ENCODE measurements at regions of chr6 and their contacts with region 1.

Region 1: GRCh38 chr6:113306552-113307145 is 550.5 kb upstream of the MARCKS start:
- DNase-seq: peak; percentile 55 to 64
- H3K4me3 ChIP-seq: no peak overlapping the region
- H3K4me3 Mint-ChIP-seq: no peak overlapping the region
- H3K27ac Mint-ChIP-seq: no peak overlapping the region
- H3K4me1 ChIP-seq: peaks cover 6% of the 10 kb centered on the region; the same call in 1 of the 2 replicates
- H3K4me1 Mint-ChIP-seq: peaks cover 7% of the 10 kb centered on the region
- H3K27me3 ChIP-seq: no peaks in the 10 kb centered on the region
- H3K27me3 Mint-ChIP-seq: no peaks in the 10 kb centered on the region
- CTCF ChIP-seq: peak; percentile 64 to 68

Region 2: DNA sequence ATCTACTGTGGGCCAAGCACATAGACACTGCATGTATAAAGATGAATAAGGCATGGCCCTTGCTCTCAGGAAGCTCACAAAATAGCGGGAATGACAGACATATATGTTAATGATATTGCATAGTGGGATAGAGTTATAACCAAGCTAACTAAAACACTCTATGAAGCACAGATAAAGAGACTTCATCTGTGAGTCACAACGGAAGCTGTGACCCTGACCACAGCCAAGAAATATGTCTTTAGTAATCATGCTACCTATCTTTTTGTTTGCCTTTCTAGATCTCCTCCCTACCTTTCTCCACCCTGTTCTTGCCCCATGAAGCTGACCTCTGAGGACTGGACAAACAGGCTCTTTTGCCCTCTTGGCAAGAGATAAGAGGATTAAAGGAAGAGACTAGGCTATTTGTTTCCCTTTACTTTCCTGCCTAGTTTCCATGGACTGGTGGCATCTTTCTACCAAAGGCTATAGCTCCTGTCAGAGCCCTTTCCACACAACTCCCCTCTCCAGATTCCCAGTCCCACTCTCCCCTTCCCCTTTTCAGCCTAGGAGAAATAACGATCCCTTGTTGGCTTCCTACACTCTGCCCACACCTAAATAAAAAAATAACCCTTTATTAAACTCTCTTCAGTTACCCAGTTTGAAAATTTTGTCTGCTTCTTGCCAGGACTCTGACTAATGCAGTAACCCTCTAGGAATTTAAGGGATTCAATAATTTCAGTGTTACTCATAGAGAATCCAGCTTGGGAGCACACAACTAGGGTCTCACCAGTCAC is 45.6 kb after region 1 on chr6:
- CTCF ChIA-PET with region 1: interaction called, 7 read pairs
- POLR2A ChIA-PET with region 1: no interaction called
- intact Hi-C with region 1: loop called (anchors 1 kb)
- DNase-seq: peak; percentile 90 to 96
- H3K4me3 ChIP-seq: no peak overlapping the region
- H3K4me3 Mint-ChIP-seq: peak overlapping the region; percentile 65
- H3K27ac Mint-ChIP-seq: peak overlapping the region; percentile 98
- H3K4me1 ChIP-seq: peaks cover 67% of the 10 kb centered on the region
- H3K4me1 Mint-ChIP-seq: peaks cover 67% of the 10 kb centered on the region
- H3K27me3 ChIP-seq: no peaks in the 10 kb centered on the region
- H3K27me3 Mint-ChIP-seq: no peaks in the 10 kb centered on the region
- CTCF ChIP-seq: no peak

Region 3: GRCh38 chr6:113381959-113382358 is 75.3 kb after region 1 on chr6:
- CTCF ChIA-PET with region 1: no interaction called
- POLR2A ChIA-PET with region 1: no interaction called
- intact Hi-C with region 1: no loop called
- DNase-seq: no peak
- H3K4me3 ChIP-seq: no peak overlapping the region
- H3K4me3 Mint-ChIP-seq: no peak overlapping the region
- H3K27ac Mint-ChIP-seq: no peak overlapping the region
- H3K4me1 ChIP-seq: no peaks in the 10 kb centered on the region
- H3K4me1 Mint-ChIP-seq: no peaks in the 10 kb centered on the region
- H3K27me3 ChIP-seq: no peaks in the 10 kb centered on the region
- H3K27me3 Mint-ChIP-seq: no peaks in the 10 kb centered on the region
- CTCF ChIP-seq: no peak

Region 4: GRCh38 chr6:113433335-113433991 is 126.8 kb after region 1 on chr6:
- CTCF ChIA-PET with region 1: no interaction called
- POLR2A ChIA-PET with region 1: no interaction called
- intact Hi-C with region 1: loop called (anchors 1 kb)
- DNase-seq: peak; percentile 76 to 78
- H3K4me3 ChIP-seq: no peak overlapping the region
- H3K4me3 Mint-ChIP-seq: peak overlapping the region; percentile 37
- H3K27ac Mint-ChIP-seq: peak overlapping the region; percentile 52
- H3K4me1 ChIP-seq: peaks cover 19% of the 10 kb centered on the region
- H3K4me1 Mint-ChIP-seq: peaks cover 15% of the 10 kb centered on the region
- H3K27me3 ChIP-seq: no peaks in the 10 kb centered on the region
- H3K27me3 Mint-ChIP-seq: no peaks in the 10 kb centered on the region
- CTCF ChIP-seq: no peak

Region 5: GRCh38 chr6:113481458-113481857 is 174.8 kb after region 1 on chr6:
- CTCF ChIA-PET with region 1: no interaction called
- POLR2A ChIA-PET with region 1: no interaction called
- intact Hi-C with region 1: loop called (anchors 5 kb)
- DNase-seq: no peak
- H3K4me3 ChIP-seq: no peak overlapping the region
- H3K4me3 Mint-ChIP-seq: no peak overlapping the region
- H3K27ac Mint-ChIP-seq: no peak overlapping the region
- H3K4me1 ChIP-seq: peaks cover 25% of the 10 kb centered on the region
- H3K4me1 Mint-ChIP-seq: no peaks in the 10 kb centered on the region
- H3K27me3 ChIP-seq: no peaks in the 10 kb centered on the region
- H3K27me3 Mint-ChIP-seq: no peaks in the 10 kb centered on the region
- CTCF ChIP-seq: no peak

Region 6: DNA sequence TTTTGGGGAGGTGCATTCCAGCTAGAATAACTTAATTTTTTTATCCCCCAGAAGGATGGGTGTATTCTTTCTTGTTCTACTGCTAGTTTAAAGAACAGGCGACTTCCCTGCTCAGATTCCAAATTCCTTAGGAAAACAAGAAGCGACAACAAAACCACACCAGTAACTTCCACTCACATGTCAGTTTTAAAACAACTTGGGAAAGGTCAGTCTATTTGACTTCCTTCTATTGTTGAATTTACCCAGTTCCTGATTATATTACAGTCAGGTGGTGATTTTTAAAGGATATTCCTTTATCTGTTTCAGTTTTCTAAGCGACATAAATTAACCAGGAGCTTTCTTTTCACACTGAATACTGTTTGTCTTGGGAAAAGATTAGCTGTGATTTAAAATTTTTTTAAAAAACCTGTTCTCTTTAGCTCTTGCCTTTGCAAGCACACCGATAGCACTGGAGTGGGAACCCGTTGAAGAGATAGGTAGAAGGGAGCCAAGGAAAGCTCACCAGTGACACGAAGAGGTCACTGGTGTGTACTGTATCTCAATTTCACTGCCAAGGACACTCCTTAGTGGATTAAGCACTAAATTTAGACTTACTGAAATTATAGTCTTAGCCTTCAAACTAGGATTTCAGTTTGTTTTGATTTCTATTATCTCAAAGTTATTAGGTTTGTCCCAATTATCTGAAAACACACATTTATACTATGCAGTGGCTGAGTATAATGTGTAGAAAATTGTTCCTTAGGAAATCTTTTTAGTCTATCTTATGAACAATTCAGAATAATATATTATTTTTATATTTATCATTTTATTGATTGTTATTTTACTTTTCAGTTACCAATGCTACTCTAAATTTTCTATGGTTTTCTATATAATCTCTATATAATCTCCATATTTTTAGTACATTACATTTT is 572.8 kb after region 1 on chr6:
- CTCF ChIA-PET with region 1: interaction called, 17 read pairs
- POLR2A ChIA-PET with region 1: no interaction called
- intact Hi-C with region 1: loop called (anchors 1 kb)
- DNase-seq: peak; percentile 60 to 68
- H3K4me3 ChIP-seq: no peak overlapping the region
- H3K4me3 Mint-ChIP-seq: no peak overlapping the region
- H3K27ac Mint-ChIP-seq: no peak overlapping the region
- H3K4me1 ChIP-seq: peaks cover 18% of the 10 kb centered on the region
- H3K4me1 Mint-ChIP-seq: peaks cover 8% of the 10 kb centered on the region
- H3K27me3 ChIP-seq: no peaks in the 10 kb centered on the region
- H3K27me3 Mint-ChIP-seq: no peaks in the 10 kb centered on the region
- CTCF ChIP-seq: peak; percentile 78 to 81

Measured in Caco-2 (cell line).